ENCODE measurements at regions of chr6 and their contacts with region 1.

Region 1: GRCh38 chr6:26270903-26271667 is 93.9 kb upstream of the BTN3A2 start:
- DNase-seq: peak; percentile 52 to 93 (median 81)
- ATAC-seq: peak; percentile 18 to 39
- H3K4me3 Mint-ChIP-seq: no peak overlapping the region
- H3K27ac Mint-ChIP-seq: peak overlapping the region in 4 of 10 donors; percentile 20 to 97 (median 40)
- H3K4me1 Mint-ChIP-seq: peaks cover 4 to 28% (median 11%) of the 10 kb centered on the region in 4 donors
- H3K27me3 Mint-ChIP-seq: no peaks in the 10 kb centered on the region

Region 2: GRCh38 chr6:26031595-26032339 is 239.3 kb before region 1 on chr6:
- POLR2A ChIA-PET with region 1: interaction called, 13 read pairs
- DNase-seq: peak; percentile 71 to 96 (median 91)
- ATAC-seq: peak; percentile 67 to 71
- H3K4me3 Mint-ChIP-seq: peak overlapping the region; percentile 94 to 97 (median 95)
- H3K27ac Mint-ChIP-seq: peak overlapping the region; percentile 93 to 99 (median 96)
- H3K4me1 Mint-ChIP-seq: peaks cover 11 to 52% (median 41%) of the 10 kb centered on the region in 4 donors
- H3K27me3 Mint-ChIP-seq: peaks cover 0 to 2% (median 0%) of the 10 kb centered on the region in 5 donors

Region 3: GRCh38 chr6:26175428-26176181 is 95.5 kb before region 1 on chr6:
- POLR2A ChIA-PET with region 1: interaction called, 48 read pairs
- DNase-seq: peak in 9 of 10 donors; percentile 21 to 76 (median 59)
- ATAC-seq: no peak
- H3K4me3 Mint-ChIP-seq: peak overlapping the region in 5 of 10 donors; percentile 33 to 62 (median 51)
- H3K27ac Mint-ChIP-seq: peak overlapping the region; percentile 11 to 82 (median 59)
- H3K4me1 Mint-ChIP-seq: peaks cover 15 to 43% (median 34%) of the 10 kb centered on the region in 4 donors
- H3K27me3 Mint-ChIP-seq: no peaks in the 10 kb centered on the region

Region 4: GRCh38 chr6:26216356-26216885 is 54.7 kb before region 1 on chr6:
- POLR2A ChIA-PET with region 1: interaction called, 186 read pairs
- DNase-seq: peak; percentile 34 to 95 (median 86)
- ATAC-seq: peak; percentile 81 to 84
- H3K4me3 Mint-ChIP-seq: no peak overlapping the region
- H3K27ac Mint-ChIP-seq: no peak overlapping the region
- H3K4me1 Mint-ChIP-seq: peaks cover 0 to 12% (median 7%) of the 10 kb centered on the region in 4 donors
- H3K27me3 Mint-ChIP-seq: no peaks in the 10 kb centered on the region

Region 5: DNA sequence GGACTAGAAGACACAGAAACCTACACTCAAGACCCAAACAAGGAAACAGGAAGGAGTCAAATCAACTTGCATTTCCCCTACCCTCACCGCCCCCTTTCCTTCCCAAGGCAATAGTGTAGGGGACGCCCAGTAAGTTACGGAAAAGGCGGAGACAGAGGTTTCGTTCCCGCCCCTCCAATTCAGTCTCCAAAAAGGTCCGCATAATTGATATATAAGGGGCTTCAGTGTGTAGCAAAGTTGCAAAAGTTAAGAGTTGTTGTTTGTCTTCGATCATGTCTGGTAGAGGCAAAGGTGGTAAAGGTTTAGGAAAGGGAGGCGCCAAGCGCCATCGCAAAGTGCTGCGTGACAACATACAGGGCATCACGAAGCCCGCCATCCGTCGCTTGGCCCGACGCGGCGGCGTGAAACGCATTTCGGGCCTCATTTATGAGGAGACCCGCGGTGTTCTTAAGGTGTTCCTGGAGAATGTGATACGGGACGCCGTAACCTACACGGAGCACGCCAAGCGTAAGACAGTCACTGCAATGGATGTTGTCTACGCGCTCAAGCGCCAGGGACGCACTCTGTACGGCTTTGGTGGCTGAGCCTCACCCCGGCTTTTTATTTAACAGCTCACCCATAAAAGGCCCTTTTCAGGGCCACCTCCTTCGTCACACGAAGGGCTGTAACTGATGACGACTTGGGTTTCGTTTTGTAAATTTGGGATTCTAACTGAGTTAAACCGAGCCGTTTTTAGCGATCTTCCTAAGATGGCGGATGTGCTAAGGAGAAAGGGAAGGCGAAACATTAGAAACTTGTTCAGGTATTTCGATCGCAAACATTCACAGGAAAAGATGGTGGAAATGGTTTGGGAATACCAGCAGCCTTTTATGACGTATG is 30.7 kb before region 1 on chr6:
- POLR2A ChIA-PET with region 1: interaction called, 209 read pairs
- DNase-seq: peak; percentile 39 to 90 (median 80)
- ATAC-seq: peak; percentile 82 to 85
- H3K4me3 Mint-ChIP-seq: peak overlapping the region; percentile 82 to 95 (median 88)
- H3K27ac Mint-ChIP-seq: peak overlapping the region; percentile 92 to 99 (median 98)
- H3K4me1 Mint-ChIP-seq: peaks cover 9 to 25% (median 22%) of the 10 kb centered on the region in 4 donors
- H3K27me3 Mint-ChIP-seq: no peaks in the 10 kb centered on the region

Region 6: GRCh38 chr6:26312501-26313390 is 41.7 kb after region 1 on chr6:
- POLR2A ChIA-PET with region 1: interaction called, 12 read pairs
- DNase-seq: peak; percentile 65 to 94 (median 86)
- ATAC-seq: peak; percentile 71 to 81
- H3K4me3 Mint-ChIP-seq: peak overlapping the region; percentile 92 to 97 (median 94)
- H3K27ac Mint-ChIP-seq: peak overlapping the region; percentile 74 to 100 (median 94)
- H3K4me1 Mint-ChIP-seq: peaks cover 20 to 47% (median 41%) of the 10 kb centered on the region in 4 donors
- H3K27me3 Mint-ChIP-seq: peaks cover 0 to 6% (median 0%) of the 10 kb centered on the region in 5 donors

Region 7: GRCh38 chr6:27809939-27810767 is 1539.1 kb after region 1 on chr6:
- POLR2A ChIA-PET with region 1: interaction called, 12 read pairs
- DNase-seq: peak; percentile 58 to 95 (median 84)
- ATAC-seq: peak; percentile 63 to 65
- H3K4me3 Mint-ChIP-seq: peak overlapping the region; percentile 90 to 97 (median 96)
- H3K27ac Mint-ChIP-seq: peak overlapping the region; percentile 97 to 99 (median 98)
- H3K4me1 Mint-ChIP-seq: peaks cover 32 to 72% (median 47%) of the 10 kb centered on the region in 4 donors
- H3K27me3 Mint-ChIP-seq: no peaks in the 10 kb centered on the region